T-cell (primary cell): ENCODE measurements at regions of chr12 and their contacts with region 1.

Region 1: DNA sequence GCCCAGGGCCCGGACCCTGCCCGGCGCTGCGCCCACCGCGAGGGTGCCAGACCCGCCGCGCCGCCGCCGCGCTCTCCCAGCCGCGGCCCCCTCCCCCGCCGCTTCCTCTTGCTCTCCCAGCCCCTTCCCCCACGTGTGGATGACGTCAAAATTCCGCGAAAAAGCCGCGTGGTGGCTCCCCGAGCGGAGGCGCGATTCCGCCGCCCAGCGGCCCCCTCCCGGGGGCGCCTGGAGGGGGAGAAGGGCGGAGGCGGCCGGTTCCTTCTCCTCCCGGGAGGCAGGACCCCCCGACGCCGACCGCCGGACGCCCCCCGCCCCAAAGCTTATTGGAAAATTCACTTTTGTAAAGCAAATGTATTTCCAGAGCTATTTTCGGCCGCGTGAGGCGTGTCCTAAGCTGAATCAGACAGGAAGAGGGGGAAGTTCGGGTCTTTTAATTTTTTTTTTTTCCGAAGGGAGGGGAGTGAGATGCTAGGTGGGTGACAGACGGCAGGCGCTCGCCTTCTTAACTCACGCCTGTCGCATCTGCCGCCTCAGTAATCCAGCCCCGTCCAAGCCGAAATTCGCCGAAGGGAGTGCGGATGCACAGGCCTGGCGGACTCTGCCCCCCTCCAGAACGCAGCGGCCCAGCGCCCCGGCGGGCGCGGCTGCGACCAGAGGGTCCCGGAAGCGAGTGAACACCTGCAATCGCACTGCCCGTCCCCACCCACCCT is 4.1 kb upstream of the CCND2 start:
- DNase-seq: peak; percentile 85 to 96 (median 92)
- ATAC-seq: peak; percentile 45 to 52 (median 49)
- H3K4me3 ChIP-seq: peak overlapping the region; percentile 73 to 96
- H3K4me3 Mint-ChIP-seq: peak overlapping the region; percentile 92 to 98 (median 96)
- H3K27ac ChIP-seq: peak overlapping the region; percentile 94
- H3K27ac Mint-ChIP-seq: peak overlapping the region; percentile 95 to 97
- H3K4me1 ChIP-seq: peaks cover 6 to 42% of the 10 kb centered on the region in 2 experiments
- H3K4me1 Mint-ChIP-seq: peaks cover 12 to 27% (median 18%) of the 10 kb centered on the region in 3 donors
- H3K27me3 ChIP-seq: peaks cover 0 to 3% of the 10 kb centered on the region in 2 experiments
- H3K27me3 Mint-ChIP-seq: peaks cover 2 to 4% of the 10 kb centered on the region in 2 donors

Region 2: GRCh38 chr12:4107436-4107878 is 162.0 kb before region 1 on chr12:
- CTCF ChIA-PET with region 1: interaction called in 1 of 2 experiments, 11 read pairs
- POLR2A ChIA-PET with region 1: no interaction called
- DNase-seq: peak; percentile 29 to 91 (median 70)
- ATAC-seq: peak; percentile 96 to 100 (median 97)
- H3K4me3 ChIP-seq: no peak overlapping the region
- H3K4me3 Mint-ChIP-seq: peak overlapping the region in 2 of 3 donors; percentile 28 to 45
- H3K27ac ChIP-seq: peak overlapping the region; percentile 65
- H3K27ac Mint-ChIP-seq: peak overlapping the region; percentile 71 to 79
- H3K4me1 ChIP-seq: peaks cover 7 to 12% of the 10 kb centered on the region in 2 experiments
- H3K4me1 Mint-ChIP-seq: peaks cover 14 to 21% (median 16%) of the 10 kb centered on the region in 3 donors
- H3K27me3 ChIP-seq: no peaks in the 10 kb centered on the region
- H3K27me3 Mint-ChIP-seq: no peaks in the 10 kb centered on the region

Region 3: GRCh38 chr12:4240161-4240783 is 29.2 kb before region 1 on chr12:
- CTCF ChIA-PET with region 1: no interaction called
- POLR2A ChIA-PET with region 1: no interaction called
- DNase-seq: no peak
- ATAC-seq: no peak
- H3K4me3 ChIP-seq: no peak overlapping the region
- H3K4me3 Mint-ChIP-seq: no peak overlapping the region
- H3K27ac ChIP-seq: no peak overlapping the region
- H3K27ac Mint-ChIP-seq: no peak overlapping the region
- H3K4me1 ChIP-seq: no peaks in the 10 kb centered on the region
- H3K4me1 Mint-ChIP-seq: peaks cover 0 to 7% (median 0%) of the 10 kb centered on the region in 3 donors
- H3K27me3 ChIP-seq: peaks cover 0 to 37% of the 10 kb centered on the region in 2 experiments
- H3K27me3 Mint-ChIP-seq: peaks cover 10 to 14% of the 10 kb centered on the region in 2 donors